Heart left ventricle (tissue), 16 donors: ENCODE measurements at regions of chr13 and their contacts with region 1.

Region 1: DNA sequence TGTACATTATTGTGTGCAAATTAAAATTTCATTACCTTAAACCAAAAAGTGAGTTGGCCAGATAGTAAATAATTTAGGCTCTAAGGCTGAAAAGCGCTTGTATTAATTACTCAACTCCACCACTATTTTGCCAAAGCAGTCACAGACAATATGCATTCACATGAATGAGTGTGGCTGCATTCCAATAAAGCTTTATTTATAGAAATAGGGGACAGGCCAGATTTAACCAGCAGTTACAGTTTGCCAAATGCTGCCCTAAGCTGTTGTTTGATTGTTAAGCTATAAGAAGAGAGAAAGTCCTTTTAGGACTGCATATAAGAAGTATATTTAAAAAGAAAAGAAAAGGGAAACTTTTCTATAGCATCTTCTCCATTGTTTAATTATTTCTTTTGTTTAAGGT is 342.6 kb downstream of the ITGBL1 start:
- DNase-seq: no peak
- ATAC-seq: peak; percentile 51 to 81 (median 75)
- H3K4me3 ChIP-seq: no peak overlapping the region
- H3K27ac ChIP-seq: peak overlapping the region in 1 of 12 donors; percentile 6
- H3K4me1 ChIP-seq: peaks cover 0 to 21% (median 0%) of the 10 kb centered on the region in 12 donors
- H3K27me3 ChIP-seq: no peaks in the 10 kb centered on the region
- CTCF ChIP-seq: no peak
- POLR2A ChIP-seq: no peak

Region 2: DNA sequence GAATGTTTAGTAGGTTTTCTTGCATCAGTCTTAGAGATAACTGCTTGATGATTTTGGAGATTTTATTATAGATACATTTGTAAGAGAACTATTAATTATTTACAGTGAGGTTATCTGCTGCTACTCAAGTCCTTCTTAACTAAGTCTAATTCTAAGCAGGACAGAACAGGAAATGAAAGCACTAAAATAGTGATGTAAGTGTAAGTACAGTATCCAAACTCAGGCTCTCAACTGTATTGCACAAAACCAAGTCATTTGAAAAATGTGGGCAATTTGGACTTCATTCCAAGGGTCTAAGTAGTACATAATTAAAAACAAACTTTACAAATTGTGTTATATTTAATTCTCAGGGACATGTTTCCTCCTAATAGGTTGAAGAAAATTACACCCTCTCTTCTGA is 74.5 kb after region 1 on chr13:
- intact Hi-C with region 1: loop called in 1 of 10 experiments (anchors 5 kb)
- DNase-seq: no peak
- ATAC-seq: no peak
- H3K4me3 ChIP-seq: peak overlapping the region in 1 of 12 donors; percentile 11
- H3K27ac ChIP-seq: peak overlapping the region in 11 of 12 donors; percentile 7 to 92 (median 81)
- H3K4me1 ChIP-seq: peaks cover 0 to 15% (median 0%) of the 10 kb centered on the region in 12 donors
- H3K27me3 ChIP-seq: no peaks in the 10 kb centered on the region
- CTCF ChIP-seq: no peak
- POLR2A ChIP-seq: no peak

Region 3: GRCh38 chr13:101916108-101916757 is 121.2 kb after region 1 on chr13:
- intact Hi-C with region 1: loop called in 1 of 10 experiments (anchors 10 kb)
- DNase-seq: peak; percentile 25 to 66 (median 45)
- ATAC-seq: peak; percentile 68 to 90 (median 84)
- H3K4me3 ChIP-seq: peak overlapping the region; percentile 29 to 59 (median 48)
- H3K27ac ChIP-seq: no peak overlapping the region
- H3K4me1 ChIP-seq: peaks cover 0 to 21% (median 4%) of the 10 kb centered on the region in 12 donors
- H3K27me3 ChIP-seq: peaks cover 9 to 75% (median 38%) of the 10 kb centered on the region in 9 donors
- CTCF ChIP-seq: peak in 11 of 12 donors; percentile 11 to 56 (median 43)
- POLR2A ChIP-seq: no peak